PC-9 (cell line): ENCODE measurements at regions of chr6 and their contacts with region 1.

Region 1: DNA sequence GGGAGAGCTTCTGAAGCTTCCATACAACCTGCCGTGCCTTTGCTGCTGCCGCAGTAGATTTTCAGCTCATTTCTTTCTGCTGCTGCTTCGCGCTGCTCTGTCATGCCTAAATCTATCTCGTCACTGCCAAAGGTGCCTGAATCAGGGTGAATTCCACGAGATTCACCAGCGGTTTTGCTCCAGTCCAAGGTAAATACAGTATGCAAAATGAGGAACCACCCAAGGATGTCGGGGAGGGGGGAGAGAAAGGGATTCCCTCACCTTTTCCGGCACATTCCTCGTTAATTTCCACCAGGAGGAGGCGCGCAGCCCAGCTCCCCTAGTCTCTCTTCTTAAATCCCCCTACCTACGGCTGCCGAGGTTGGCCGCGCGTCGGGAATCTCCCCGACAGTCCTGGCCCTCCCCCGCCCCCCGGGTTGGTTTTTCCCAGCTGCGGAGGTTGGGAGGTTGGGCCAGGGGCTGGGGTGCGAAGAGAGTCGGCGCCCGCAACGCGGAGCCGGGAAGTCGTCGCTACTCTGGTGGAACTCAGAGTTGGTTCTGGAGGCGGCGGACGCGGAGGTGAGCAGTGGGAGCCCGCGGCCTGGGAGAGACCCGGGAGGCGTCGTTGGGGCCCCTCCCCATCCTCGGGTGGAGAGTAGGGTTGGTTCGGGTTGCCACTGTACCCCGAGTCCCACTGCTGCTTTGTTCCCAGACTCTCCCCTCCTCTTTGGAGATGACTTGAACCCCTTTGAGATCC is at the start of gene TPBG:
- DNase-seq: peak; percentile 46 to 71
- H3K4me3 ChIP-seq: peak within 1 kb of the TSS; percentile 87
- H3K27ac ChIP-seq: peak within 1 kb of the TSS; percentile 79
- H3K4me1 ChIP-seq: peaks cover 28% of the 10 kb centered on the region
- H3K27me3 ChIP-seq: no peaks in the 10 kb centered on the region
- CTCF ChIP-seq: peak; percentile 51
- total RNA-seq, gene TPBG: 42.5 and 44.6 TPM in 2 replicates

Region 2: GRCh38 chr6:82270881-82271645 is 92.5 kb before region 1 on chr6:
- CTCF ChIA-PET with region 1: interaction called, 3 read pairs
- POLR2A ChIA-PET with region 1: no interaction called
- intact Hi-C with region 1: loop called (anchors 2 kb)
- DNase-seq: peak in 1 of 2 experiments; percentile 35
- H3K4me3 ChIP-seq: no peak overlapping the region
- H3K27ac ChIP-seq: no peak overlapping the region
- H3K4me1 ChIP-seq: no peaks in the 10 kb centered on the region
- H3K27me3 ChIP-seq: no peaks in the 10 kb centered on the region
- CTCF ChIP-seq: peak; percentile 74

Region 3: DNA sequence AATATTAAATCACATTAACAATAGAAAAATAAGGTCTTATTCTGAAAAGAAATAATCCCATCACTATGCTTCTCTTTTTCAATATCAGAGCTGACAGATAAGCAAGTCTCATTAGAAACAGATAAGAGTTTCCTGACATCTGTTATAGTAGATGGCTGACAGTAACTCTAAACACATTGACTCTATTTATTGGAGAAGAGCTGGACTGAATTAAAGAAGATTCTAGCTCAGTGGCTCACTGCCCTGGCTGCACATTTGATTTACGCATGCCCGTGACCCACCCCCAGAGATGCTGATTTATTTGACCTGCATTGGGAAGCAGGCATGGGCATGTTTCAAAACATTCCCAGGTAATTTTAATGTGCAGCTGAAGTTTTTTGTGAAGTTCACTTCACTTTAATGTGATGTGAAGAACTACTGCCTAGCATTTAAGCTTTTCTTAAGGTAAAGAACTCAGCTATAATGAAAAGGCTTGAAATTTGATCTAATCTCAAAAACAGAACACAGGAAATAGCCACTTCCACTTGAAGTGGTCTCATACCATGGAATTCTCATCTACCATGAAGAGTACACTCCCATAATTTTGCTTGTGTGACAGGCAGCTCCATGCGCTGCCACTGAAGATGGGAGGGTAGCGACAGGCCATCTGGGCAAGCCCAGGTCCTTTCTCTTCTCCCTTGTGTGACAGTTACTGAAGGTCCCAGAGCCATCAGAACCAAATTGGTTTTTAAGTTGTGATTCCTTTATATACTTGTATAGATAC is 162.4 kb after region 1 on chr6:
- CTCF ChIA-PET with region 1: interaction called, 9 read pairs
- POLR2A ChIA-PET with region 1: no interaction called
- intact Hi-C with region 1: loop called (anchors 10 kb)
- DNase-seq: no peak
- H3K4me3 ChIP-seq: no peak overlapping the region
- H3K27ac ChIP-seq: no peak overlapping the region
- H3K4me1 ChIP-seq: no peaks in the 10 kb centered on the region
- H3K27me3 ChIP-seq: no peaks in the 10 kb centered on the region
- CTCF ChIP-seq: no peak

Region 4: DNA sequence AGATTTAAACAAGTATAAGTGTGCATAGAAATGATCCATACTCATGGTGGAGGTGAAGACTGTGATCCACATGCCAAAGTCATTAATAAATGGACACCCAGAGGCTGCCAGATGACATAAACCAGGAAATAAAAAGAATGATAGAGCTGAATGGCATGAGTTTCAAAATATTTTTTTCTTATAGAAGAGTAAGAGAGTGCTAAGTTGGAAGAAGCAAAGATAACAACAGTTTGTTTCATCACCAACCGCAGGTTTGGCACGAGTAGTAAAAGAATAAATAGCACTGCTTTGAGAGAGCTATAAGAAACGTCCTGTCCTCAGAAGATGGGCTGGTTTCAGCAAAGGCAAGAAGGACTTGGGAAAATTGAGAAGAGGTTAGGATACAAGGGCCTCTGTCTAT is 455.2 kb after region 1 on chr6:
- CTCF ChIA-PET with region 1: no interaction called
- POLR2A ChIA-PET with region 1: no interaction called
- intact Hi-C with region 1: loop called (anchors 5 kb)
- DNase-seq: peak; percentile 38 to 70
- H3K4me3 ChIP-seq: no peak overlapping the region
- H3K27ac ChIP-seq: no peak overlapping the region
- H3K4me1 ChIP-seq: no peaks in the 10 kb centered on the region; the same call in 1 of the 2 replicates
- H3K27me3 ChIP-seq: no peaks in the 10 kb centered on the region
- CTCF ChIP-seq: no peak

Region 5: DNA sequence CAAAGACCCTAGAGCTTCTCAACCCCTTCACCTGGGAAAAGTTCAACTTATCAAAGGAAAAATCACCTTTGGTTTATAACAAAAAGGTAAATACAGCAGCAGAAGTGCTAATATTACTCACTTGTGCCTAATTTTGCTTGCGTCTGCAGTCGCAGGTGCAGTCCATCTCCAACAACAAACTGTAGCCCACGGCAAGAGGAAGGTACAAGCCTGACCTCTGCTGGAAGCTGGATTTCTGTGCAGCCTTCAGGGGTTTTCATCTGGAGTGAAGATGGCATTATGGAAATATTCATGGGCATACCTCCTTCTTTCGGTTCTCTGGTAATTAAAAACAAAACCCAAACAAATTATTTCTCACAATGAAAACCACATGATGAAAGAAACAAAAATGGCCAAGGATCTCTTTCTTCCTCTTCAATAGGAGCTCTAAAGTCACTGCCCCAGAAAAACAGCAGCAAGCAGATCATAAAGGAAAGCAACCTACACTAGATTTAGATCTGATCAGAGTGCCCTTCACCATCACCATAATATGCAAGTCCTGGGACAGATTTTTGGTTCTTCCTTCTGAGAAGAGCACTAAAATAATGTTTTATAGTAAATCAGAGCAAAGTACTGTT is 694.3 kb after region 1 on chr6:
- CTCF ChIA-PET with region 1: no interaction called
- POLR2A ChIA-PET with region 1: no interaction called
- intact Hi-C with region 1: loop called (anchors 10 kb)
- DNase-seq: peak in 1 of 2 experiments; percentile 44
- H3K4me3 ChIP-seq: no peak overlapping the region
- H3K27ac ChIP-seq: no peak overlapping the region
- H3K4me1 ChIP-seq: no peaks in the 10 kb centered on the region
- H3K27me3 ChIP-seq: no peaks in the 10 kb centered on the region
- CTCF ChIP-seq: peak; percentile 64